ENCODE measurements at regions of chr19 and their contacts with region 1.

Region 1: DNA sequence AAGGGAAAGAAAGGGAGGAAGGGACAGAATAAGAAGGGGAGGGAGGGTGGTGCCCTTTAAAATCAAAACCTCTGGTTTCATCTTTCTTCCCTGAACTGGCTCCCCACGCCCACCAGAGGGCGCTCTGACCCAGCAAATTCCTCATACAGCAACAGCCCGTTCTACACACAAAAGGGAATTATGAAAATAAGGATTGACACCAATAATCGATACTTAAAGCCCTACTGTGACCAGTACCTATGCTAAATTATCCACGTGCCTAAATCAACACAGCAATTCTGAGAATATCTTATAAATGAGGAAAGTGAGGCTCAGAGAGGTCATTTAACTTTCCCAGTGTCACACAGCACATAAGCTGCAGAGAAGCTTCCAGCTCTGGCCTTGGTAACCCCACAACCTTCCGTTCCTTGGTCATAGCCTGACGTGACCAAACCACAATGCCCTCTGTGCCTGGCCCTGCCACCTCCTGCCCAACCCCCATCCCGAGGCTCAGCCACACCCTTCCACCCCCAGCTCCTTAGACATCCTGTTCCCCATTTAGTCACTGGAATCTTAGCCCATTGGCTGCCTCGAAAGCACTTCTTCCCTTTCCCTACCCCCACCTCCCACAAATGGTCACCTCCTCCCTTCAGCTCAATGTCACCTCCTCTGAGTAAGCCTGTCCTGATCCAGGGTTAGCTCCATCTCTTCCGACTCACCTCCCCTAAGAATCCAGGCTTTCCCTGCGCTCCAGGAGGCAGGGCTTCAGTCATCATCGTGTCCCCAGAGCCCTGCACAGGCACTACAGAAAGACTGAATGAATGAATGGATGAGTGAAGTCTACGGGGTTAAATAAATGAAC is 34.2 kb upstream of the PNMA8B start:
- DNase-seq: peak; percentile 57 to 88 (median 74)
- ATAC-seq: peak; percentile 75
- H3K4me3 ChIP-seq: no peak overlapping the region
- H3K4me3 Mint-ChIP-seq: no peak overlapping the region
- H3K27ac ChIP-seq: no peak overlapping the region
- H3K27ac Mint-ChIP-seq: no peak overlapping the region
- H3K4me1 ChIP-seq: peaks cover 4% of the 10 kb centered on the region
- H3K4me1 Mint-ChIP-seq: peaks cover 13% of the 10 kb centered on the region
- H3K27me3 ChIP-seq: peaks cover 0 to 2% of the 10 kb centered on the region in 2 experiments
- H3K27me3 Mint-ChIP-seq: no peaks in the 10 kb centered on the region
- CTCF ChIP-seq: peak; percentile 99

Region 2: GRCh38 chr19:46107371-46107770 is 422.5 kb before region 1 on chr19:
- CTCF ChIA-PET with region 1: no interaction called
- POLR2A ChIA-PET with region 1: no interaction called
- intact Hi-C with region 1: no loop called
- DNase-seq: no peak
- ATAC-seq: no peak
- H3K4me3 ChIP-seq: no peak overlapping the region
- H3K4me3 Mint-ChIP-seq: no peak overlapping the region
- H3K27ac ChIP-seq: no peak overlapping the region
- H3K27ac Mint-ChIP-seq: no peak overlapping the region
- H3K4me1 ChIP-seq: no peaks in the 10 kb centered on the region
- H3K4me1 Mint-ChIP-seq: no peaks in the 10 kb centered on the region
- H3K27me3 ChIP-seq: no peaks in the 10 kb centered on the region
- H3K27me3 Mint-ChIP-seq: peaks cover 15% of the 10 kb centered on the region
- CTCF ChIP-seq: no peak

Region 3: GRCh38 chr19:46542428-46543230 is 12.8 kb after region 1 on chr19:
- CTCF ChIA-PET with region 1: interaction called, 459 read pairs
- POLR2A ChIA-PET with region 1: no interaction called
- intact Hi-C with region 1: loop called (anchors 1 kb)
- DNase-seq: peak; percentile 59 to 87 (median 82)
- ATAC-seq: peak; percentile 67
- H3K4me3 ChIP-seq: no peak overlapping the region
- H3K4me3 Mint-ChIP-seq: no peak overlapping the region
- H3K27ac ChIP-seq: no peak overlapping the region
- H3K27ac Mint-ChIP-seq: no peak overlapping the region
- H3K4me1 ChIP-seq: no peaks in the 10 kb centered on the region
- H3K4me1 Mint-ChIP-seq: peaks cover 3% of the 10 kb centered on the region
- H3K27me3 ChIP-seq: peaks cover 0 to 3% of the 10 kb centered on the region in 2 experiments
- H3K27me3 Mint-ChIP-seq: no peaks in the 10 kb centered on the region
- CTCF ChIP-seq: peak; percentile 86

Measured in CD8-positive, alpha-beta T cell (primary cell).